PC-3 (cell line): ENCODE measurements at regions of chr12 and their contacts with region 1.

Region 1: GRCh38 chr12:65673732-65674131 is 150.6 kb upstream of the HMGA2 start:
- DNase-seq: peak; percentile 32
- ATAC-seq: peak; percentile 50
- H3K4me3 ChIP-seq: no peak overlapping the region
- H3K27ac ChIP-seq: peak overlapping the region; percentile 71
- H3K4me1 ChIP-seq: peaks cover 46% of the 10 kb centered on the region
- H3K27me3 ChIP-seq: no peaks in the 10 kb centered on the region
- CTCF ChIP-seq: peak; percentile 56

Region 2: DNA sequence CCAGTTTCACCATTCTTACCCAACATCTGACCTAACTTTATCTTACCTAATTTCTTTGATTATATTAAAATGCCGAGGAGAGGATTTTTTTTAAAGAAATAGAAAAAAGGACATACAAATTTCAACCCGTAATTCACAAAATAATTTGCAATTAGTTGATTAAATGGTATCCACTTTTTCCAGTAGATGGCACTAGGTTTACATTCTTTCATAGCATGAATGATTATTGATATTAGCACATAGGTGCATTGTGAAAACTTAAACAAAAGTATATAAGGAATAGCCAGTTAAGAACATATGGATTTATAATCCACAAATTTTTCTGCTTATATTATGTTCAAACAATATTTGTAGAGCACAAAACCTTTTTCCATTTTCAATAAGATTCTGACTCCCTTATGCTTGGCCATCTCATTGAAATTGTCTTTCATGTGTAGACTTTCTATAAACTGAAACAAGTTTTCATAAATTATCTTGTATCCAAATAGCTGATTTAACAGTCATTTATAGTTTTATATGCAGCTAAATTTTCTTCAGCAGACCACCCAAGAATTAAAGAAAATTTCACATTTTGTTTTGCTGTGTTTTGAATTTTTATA is 359.9 kb before region 1 on chr12:
- CTCF ChIA-PET with region 1: no interaction called
- POLR2A ChIA-PET with region 1: no interaction called
- intact Hi-C with region 1: loop called (anchors 2 kb)
- DNase-seq: peak; percentile 79
- ATAC-seq: peak; percentile 46; the same call in 1 of the 2 replicates
- H3K4me3 ChIP-seq: no peak overlapping the region; the same call in 1 of the 2 replicates
- H3K27ac ChIP-seq: peak overlapping the region; percentile 30
- H3K4me1 ChIP-seq: peaks cover 24% of the 10 kb centered on the region
- H3K27me3 ChIP-seq: no peaks in the 10 kb centered on the region
- CTCF ChIP-seq: peak; percentile 91

Region 3: DNA sequence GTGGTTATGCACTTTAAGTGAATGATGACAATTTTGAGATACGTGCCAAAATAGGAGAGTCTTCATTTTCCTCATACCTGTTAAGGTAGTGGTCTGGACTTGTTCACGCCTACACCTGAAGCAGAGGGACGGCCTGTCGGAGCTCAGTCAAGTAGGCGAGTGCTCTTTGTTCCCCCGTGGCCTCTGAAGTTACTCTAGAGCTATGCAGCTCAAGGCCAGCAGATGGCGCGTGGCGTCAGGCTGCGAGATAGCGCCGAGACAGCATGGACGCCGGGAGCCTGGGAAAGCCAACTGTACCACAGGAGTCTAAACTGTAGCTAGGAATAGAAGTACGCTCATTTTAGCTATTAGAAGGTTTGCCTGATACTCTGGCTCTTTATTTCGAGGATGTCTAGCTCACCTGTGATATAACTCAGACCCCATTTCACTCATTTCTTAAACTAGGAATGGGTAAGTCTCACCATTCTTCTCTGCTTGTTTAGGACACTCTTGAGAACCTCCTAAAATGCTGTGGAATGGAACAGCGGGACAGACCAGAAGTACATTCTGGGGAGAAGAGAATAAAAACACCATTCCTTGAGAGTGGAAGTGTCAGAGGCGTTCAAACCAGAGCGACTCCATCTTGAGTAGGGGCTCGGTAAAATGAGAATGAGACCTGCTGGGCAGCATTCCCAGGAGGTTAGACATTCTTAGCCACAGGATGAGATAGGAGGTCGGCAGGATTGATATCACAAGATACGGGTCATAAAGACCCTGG is 116.9 kb before region 1 on chr12:
- CTCF ChIA-PET with region 1: no interaction called
- POLR2A ChIA-PET with region 1: no interaction called
- intact Hi-C with region 1: loop called (anchors 2 kb)
- DNase-seq: peak; percentile 95
- ATAC-seq: peak; percentile 99
- H3K4me3 ChIP-seq: no peak overlapping the region
- H3K27ac ChIP-seq: peak overlapping the region; percentile 56
- H3K4me1 ChIP-seq: peaks cover 22% of the 10 kb centered on the region
- H3K27me3 ChIP-seq: no peaks in the 10 kb centered on the region
- CTCF ChIP-seq: peak; percentile 94

Region 4: GRCh38 chr12:65631621-65632111 is 42.1 kb before region 1 on chr12:
- CTCF ChIA-PET with region 1: interaction called, 6 read pairs
- POLR2A ChIA-PET with region 1: no interaction called
- intact Hi-C with region 1: loop called (anchors 1 kb)
- DNase-seq: peak; percentile 99
- ATAC-seq: peak; percentile 49
- H3K4me3 ChIP-seq: no peak overlapping the region; the same call in 1 of the 2 replicates
- H3K27ac ChIP-seq: peak overlapping the region; percentile 99
- H3K4me1 ChIP-seq: peaks cover 65% of the 10 kb centered on the region
- H3K27me3 ChIP-seq: no peaks in the 10 kb centered on the region
- CTCF ChIP-seq: no peak

Region 5: GRCh38 chr12:65656904-65657351 is 16.8 kb before region 1 on chr12:
- CTCF ChIA-PET with region 1: no interaction called
- POLR2A ChIA-PET with region 1: interaction called, 5 read pairs
- intact Hi-C with region 1: loop called (anchors 1 kb)
- DNase-seq: peak; percentile 99
- ATAC-seq: peak; percentile 85
- H3K4me3 ChIP-seq: no peak overlapping the region
- H3K27ac ChIP-seq: peak overlapping the region; percentile 99
- H3K4me1 ChIP-seq: peaks cover 35% of the 10 kb centered on the region
- H3K27me3 ChIP-seq: no peaks in the 10 kb centered on the region
- CTCF ChIP-seq: no peak

Region 6: DNA sequence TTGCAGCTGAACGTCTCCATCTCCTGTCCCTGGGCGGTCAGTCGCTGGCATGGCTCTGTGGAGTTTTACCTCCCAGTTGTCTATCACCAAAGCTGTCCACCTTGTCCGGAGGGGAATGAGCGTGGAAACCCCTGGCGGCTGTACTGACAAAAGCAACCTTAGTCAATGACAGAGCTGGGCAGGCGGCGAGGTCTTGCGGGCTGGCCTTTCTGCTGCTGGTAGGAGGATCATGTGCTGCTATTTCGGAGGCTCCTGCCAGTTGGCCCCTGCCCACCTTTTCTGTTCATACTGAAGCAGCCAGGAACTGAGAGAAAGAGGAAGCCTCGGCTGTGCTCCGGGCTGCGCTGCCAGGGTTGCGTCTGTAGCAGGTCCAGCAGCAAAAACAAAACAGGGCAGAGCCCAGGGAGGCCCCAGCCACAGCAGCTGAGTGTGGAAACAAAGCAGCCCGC is 208.3 kb after region 1 on chr12:
- CTCF ChIA-PET with region 1: no interaction called
- POLR2A ChIA-PET with region 1: no interaction called
- intact Hi-C with region 1: no loop called
- DNase-seq: no peak
- ATAC-seq: no peak; the same call in 1 of the 2 replicates
- H3K4me3 ChIP-seq: no peak overlapping the region
- H3K27ac ChIP-seq: no peak overlapping the region
- H3K4me1 ChIP-seq: peaks cover 59% of the 10 kb centered on the region
- H3K27me3 ChIP-seq: no peaks in the 10 kb centered on the region
- CTCF ChIP-seq: no peak

Region 7: DNA sequence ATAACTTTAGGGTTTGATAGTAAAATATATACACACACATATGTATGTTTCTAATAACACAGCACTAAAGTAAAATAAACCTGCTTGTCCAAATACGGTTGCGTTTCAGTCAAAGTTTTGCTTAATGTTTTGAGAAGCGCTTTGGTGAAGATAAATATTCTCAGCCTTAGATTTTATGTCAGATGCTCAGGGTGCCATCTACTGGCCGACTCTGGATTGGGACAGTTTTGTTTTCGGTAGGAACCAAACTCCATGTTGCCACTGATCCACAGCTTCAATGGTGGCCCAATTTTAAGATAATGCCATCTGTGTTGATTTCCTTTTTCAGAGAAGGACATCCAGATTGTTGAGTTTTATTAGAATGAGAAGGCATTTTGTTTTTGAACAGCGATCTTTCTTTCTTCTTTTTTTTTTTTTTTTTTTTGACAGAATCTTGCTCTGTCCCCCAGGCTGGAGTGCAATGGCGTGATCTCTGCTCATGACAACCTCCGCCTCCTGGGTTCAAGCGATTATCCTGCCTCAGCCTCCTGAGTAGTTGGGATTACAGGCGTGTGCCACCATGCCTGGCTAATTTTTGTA is 413.7 kb after region 1 on chr12:
- CTCF ChIA-PET with region 1: no interaction called
- POLR2A ChIA-PET with region 1: no interaction called
- intact Hi-C with region 1: loop called (anchors 1 kb)
- DNase-seq: peak; percentile 84
- ATAC-seq: peak; percentile 75
- H3K4me3 ChIP-seq: no peak overlapping the region
- H3K27ac ChIP-seq: no peak overlapping the region
- H3K4me1 ChIP-seq: peaks cover 10% of the 10 kb centered on the region
- H3K27me3 ChIP-seq: no peaks in the 10 kb centered on the region
- CTCF ChIP-seq: peak; percentile 89